PC-3 (cell line): ENCODE measurements at regions of chr5 and their contacts with region 1.

Region 1: DNA sequence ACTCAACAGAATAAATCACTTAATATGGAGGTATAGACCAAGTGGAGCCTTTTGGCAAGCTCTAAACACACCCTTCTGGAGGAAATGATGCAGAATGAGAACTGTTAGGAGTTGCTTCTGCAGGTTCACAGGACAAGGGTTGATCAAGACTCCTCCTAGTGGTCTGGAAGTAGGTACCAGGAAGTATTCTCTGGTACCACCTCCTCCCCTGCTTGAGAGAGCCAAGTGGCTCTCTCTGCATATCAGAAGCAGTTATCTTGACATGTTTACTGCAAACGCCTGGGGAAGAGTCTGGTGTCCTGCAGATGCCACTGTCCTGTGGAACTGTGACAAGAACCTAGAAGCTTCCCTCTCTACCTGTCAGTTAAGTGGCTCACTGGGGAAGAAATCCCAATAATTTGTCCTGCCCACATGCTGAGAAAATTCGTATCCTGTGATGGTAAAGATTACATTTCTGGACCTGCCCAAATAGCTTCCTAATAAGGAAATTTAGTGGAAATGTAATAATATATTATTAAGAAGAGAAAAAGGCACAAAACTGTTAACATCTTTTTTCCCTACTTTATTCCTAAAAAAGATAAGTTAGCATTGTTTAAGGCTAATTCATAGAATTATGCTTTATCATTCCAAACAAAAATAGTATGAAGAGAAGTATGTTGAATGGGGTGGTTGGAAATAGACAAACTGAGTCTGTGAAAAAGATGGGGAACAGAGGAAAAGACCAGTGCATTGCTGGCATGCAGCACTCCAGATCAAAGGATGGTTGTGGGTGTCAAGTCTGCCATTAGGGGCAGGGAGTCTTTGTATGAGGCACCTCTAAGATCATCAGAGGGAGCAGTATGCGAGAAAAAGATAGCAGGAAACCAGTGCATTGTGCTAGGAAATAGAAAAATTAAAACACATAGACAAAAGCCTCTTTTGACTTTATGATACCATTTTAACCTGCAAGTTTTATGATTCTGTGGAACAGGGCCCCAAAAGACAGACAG is 118.8 kb downstream of the CDC42SE2 start:
- DNase-seq: peak; percentile 61
- ATAC-seq: peak; percentile 54
- H3K4me3 ChIP-seq: no peak overlapping the region
- H3K27ac ChIP-seq: no peak overlapping the region
- H3K4me1 ChIP-seq: peaks cover 25% of the 10 kb centered on the region
- H3K27me3 ChIP-seq: no peaks in the 10 kb centered on the region
- CTCF ChIP-seq: peak; percentile 72

Region 2: GRCh38 chr5:131270809-131271208 is 111.9 kb before region 1 on chr5:
- CTCF ChIA-PET with region 1: no interaction called
- POLR2A ChIA-PET with region 1: no interaction called
- intact Hi-C with region 1: loop called (anchors 5 kb)
- DNase-seq: peak; percentile 78
- ATAC-seq: peak; percentile 83
- H3K4me3 ChIP-seq: peak overlapping the region; percentile 2; the same call in 1 of the 2 replicates
- H3K27ac ChIP-seq: no peak overlapping the region
- H3K4me1 ChIP-seq: peaks cover 18% of the 10 kb centered on the region
- H3K27me3 ChIP-seq: no peaks in the 10 kb centered on the region
- CTCF ChIP-seq: no peak

Region 3: DNA sequence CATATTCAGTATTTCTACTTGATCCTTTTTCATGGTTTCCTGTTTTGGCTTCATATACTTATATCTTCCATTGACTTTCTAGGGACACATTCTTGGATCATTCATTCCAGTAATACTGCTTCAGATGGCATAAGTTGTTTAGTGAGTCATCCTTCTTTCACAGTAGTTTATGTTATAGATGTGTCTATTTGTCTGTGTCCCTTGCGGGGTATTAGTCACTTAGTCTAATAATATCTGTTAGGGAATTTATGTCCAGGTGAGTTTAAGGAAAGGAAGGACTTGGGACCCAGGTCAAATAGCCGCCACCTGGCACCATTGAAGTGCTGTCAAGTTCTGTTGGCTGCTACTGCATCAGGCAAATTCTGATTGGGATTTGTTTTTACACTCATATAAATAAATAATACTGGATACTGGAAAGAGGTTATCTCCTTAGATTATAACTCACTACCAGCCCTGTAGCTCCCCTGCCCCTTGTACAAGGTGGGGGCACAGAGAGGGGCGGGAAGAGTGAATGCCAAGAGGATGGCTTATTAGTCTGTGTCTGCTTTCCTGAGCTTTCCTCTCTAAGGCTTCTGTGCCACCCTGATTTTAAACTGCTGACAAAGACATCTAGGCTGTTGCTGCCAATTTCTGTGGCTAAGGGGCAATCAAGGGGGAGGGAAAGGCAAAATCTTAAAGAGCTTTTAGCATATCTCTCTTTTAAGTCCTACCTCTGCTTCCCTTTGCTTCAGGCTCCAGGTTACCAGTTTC is 54.0 kb before region 1 on chr5:
- CTCF ChIA-PET with region 1: no interaction called
- POLR2A ChIA-PET with region 1: no interaction called
- intact Hi-C with region 1: loop called (anchors 2 kb)
- DNase-seq: peak; percentile 84
- ATAC-seq: peak; percentile 99
- H3K4me3 ChIP-seq: no peak overlapping the region
- H3K27ac ChIP-seq: peak overlapping the region; percentile 28; the same call in 1 of the 2 replicates
- H3K4me1 ChIP-seq: peaks cover 17% of the 10 kb centered on the region
- H3K27me3 ChIP-seq: no peaks in the 10 kb centered on the region
- CTCF ChIP-seq: no peak